Activated CD4-positive, alpha-beta T cell treated with anti-CD3 and anti-CD28 coated beads, Interleukin-2, amount 10 ng/mL, durations not matched to agents 24 days and 14 days (primary cell): ENCODE measurements at regions of chr1 and their contacts with region 1.

Region 1: DNA sequence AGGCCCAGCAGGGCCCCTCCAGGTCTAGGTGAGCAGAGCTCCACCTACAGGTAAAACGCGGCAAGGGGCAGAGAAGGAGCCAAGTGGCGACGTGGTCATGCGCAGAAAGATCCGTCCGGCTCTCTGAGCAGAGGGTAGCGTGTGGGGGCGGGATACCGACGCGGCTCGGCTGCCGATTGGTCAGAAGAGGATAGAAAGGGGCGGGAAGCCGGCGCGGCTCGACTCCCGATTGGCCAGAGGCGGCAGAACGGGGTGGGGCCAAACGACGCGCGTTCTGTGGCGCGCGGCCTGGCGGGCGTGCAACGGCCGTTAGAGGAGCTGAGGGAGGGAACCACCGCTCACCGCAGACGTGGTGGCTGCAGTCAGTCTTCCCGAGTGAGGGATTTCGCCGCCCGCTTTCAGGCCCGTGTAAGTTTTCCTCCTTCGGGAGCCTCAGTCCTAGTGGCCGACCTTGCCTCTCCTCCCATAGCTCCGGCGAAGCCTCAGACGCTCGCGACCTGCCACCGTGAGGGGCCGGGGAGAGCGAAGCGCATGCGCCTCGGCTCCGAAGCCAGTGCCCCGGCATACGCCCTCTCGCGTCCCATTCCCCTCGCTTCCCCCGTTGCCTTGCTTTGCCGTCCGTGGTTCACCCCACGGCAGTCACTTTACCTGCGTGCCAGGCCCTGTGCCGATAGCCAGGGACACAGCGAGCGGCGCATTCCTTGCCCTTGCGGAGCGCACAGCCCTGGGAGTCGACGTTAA is at the start of gene CEP85:
- DNase-seq: peak; percentile 99
- H3K4me3 Mint-ChIP-seq: peak within 1 kb of the TSS; percentile 96
- H3K27ac Mint-ChIP-seq: peak within 1 kb of the TSS; percentile 91
- H3K4me1 Mint-ChIP-seq: peaks cover 31% of the 10 kb centered on the region
- H3K27me3 Mint-ChIP-seq: peaks cover 6% of the 10 kb centered on the region
- total RNA-seq, gene CEP85: 39.3 and 40.8 TPM in 2 replicates

Region 2: GRCh38 chr1:26169669-26170471 is 64.2 kb before region 1 on chr1 and contains the start of gene ZNF593:
- intact Hi-C with region 1: loop called (anchors 1 kb)
- DNase-seq: peak; percentile 97
- H3K4me3 Mint-ChIP-seq: peak within 1 kb of the TSS; percentile 96
- H3K27ac Mint-ChIP-seq: peak within 1 kb of the TSS; percentile 92
- H3K4me1 Mint-ChIP-seq: peaks cover 27% of the 10 kb centered on the region
- H3K27me3 Mint-ChIP-seq: peaks cover 9% of the 10 kb centered on the region
- total RNA-seq, gene ZNF593: 84.0 and 87.1 TPM in 2 replicates